Posterior cingulate gyrus (tissue), 11 donors: ENCODE measurements at regions of chr2 and their contacts with region 1.

Region 1: GRCh38 chr2:200713003-200713703 is 98.6 kb upstream of the BZW1 start:
- DNase-seq: peak; percentile 60 to 97 (median 78)

Region 2: DNA sequence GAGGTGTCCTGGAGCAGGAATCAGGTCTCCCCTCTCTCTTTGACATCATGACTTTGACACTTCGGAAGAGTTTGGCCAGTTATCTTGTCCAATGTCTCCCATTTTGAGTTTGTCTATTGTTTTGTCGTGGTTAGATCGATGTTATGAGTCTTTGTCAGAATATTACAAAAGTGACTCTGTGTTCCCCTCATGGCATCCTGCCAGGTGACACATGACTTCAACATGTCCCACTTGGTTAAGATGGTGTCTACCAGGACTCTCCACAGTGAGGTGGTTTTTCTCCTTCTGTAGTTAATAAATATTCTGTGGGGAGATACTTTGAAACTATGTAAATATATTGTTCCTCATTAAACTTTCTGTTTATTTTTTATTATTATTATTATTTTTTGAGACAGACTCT is 21.9 kb after region 1 on chr2:
- intact Hi-C with region 1: loop called (anchors 1 kb)
- DNase-seq: peak in 6 of 10 donors; percentile 48 to 89 (median 74)

Region 3: GRCh38 chr2:200811336-200812121 is 98.4 kb after region 1 on chr2 and contains the start of gene BZW1:
- intact Hi-C with region 1: loop called (anchors 2 kb)
- DNase-seq: peak; percentile 94 to 99 (median 96)

Region 4: GRCh38 chr2:200864176-200864976 is 151.2 kb after region 1 on chr2 and contains the start of gene CLK1:
- intact Hi-C with region 1: loop called (anchors 5 kb)
- DNase-seq: peak; percentile 92 to 99 (median 94)

Region 5: GRCh38 chr2:201532686-201533304 is 819.6 kb after region 1 on chr2:
- intact Hi-C with region 1: no loop called
- DNase-seq: no peak